ENCODE measurements at regions of chr10 and their contacts with region 1.

Region 1: GRCh38 chr10:48656241-48656913 is 28.3 kb upstream of the WDFY4 start:
- DNase-seq: peak; percentile 96
- H3K4me3 Mint-ChIP-seq: peak overlapping the region; percentile 69
- H3K27ac Mint-ChIP-seq: no peak overlapping the region
- H3K4me1 Mint-ChIP-seq: peaks cover 7% of the 10 kb centered on the region
- H3K27me3 Mint-ChIP-seq: peaks cover 77% of the 10 kb centered on the region
- CTCF ChIP-seq: peak; percentile 99

Region 2: DNA sequence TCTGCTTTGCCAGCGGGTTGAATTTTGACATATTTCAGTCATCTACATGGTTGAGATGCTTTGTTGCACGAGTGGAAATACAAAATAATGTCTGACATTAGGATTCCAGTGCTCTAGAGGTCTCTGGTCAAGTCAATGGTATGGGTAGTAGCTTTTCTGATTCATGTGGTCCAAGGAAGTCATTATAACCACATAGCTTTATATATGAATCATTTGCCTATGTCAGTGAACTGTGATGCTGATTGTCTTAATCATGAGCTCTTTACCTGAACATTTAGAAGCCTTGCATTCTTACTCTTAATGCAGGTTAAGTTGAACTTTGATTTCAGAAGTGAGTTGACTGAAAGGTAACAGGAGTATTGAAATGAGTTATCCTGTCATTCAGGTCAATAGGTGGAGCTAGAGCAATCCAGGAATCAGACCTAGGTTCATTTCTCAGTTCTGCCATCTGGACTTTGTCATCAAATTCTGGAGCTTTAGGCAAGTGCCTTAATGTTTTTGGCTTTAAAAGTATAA is 346.6 kb before region 1 on chr10:
- CTCF ChIA-PET with region 1: interaction called, 15 read pairs
- intact Hi-C with region 1: no loop called
- DNase-seq: no peak
- H3K4me3 Mint-ChIP-seq: peak overlapping the region; percentile 9
- H3K27ac Mint-ChIP-seq: peak overlapping the region; percentile 52
- H3K4me1 Mint-ChIP-seq: peaks cover 38% of the 10 kb centered on the region
- H3K27me3 Mint-ChIP-seq: peaks cover 2% of the 10 kb centered on the region
- CTCF ChIP-seq: no peak

Region 3: DNA sequence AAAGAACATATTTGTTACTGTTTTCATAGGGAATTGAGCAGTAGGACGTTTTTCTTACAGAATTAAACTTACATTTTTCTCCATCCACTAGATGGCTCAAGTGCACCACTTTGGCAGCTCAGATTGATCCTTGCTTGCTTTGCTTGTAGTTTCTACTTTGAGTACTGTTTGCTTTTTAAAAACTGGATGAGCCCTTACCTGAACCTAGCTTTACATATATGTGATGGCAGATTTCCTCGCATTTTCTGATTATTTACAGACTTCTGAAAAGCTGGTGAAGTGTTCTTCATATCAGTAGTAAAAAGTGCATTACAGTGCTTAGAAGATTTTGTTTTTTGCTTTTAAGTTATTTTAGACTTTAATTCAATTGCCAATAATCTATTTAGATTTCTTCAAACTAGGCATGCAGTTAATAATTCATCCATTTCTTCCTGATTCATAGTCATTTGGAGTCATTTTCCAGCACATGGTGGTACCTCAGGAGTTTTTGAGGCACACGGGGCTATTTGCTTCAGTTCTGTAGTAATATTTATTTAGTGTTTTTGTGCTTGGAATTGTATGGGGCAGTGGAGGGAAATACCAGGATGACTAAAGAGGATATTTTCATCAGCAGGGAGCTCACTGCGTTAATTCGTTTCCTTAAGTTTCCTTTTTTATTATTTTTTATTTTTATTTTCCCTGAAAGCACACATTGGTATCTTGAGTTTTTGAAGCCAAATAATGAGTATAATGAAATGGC is 292.6 kb before region 1 on chr10:
- CTCF ChIA-PET with region 1: interaction called, 21 read pairs
- intact Hi-C with region 1: loop called (anchors 1 kb)
- DNase-seq: peak; percentile 44
- H3K4me3 Mint-ChIP-seq: peak overlapping the region; percentile 49
- H3K27ac Mint-ChIP-seq: peak overlapping the region; percentile 76
- H3K4me1 Mint-ChIP-seq: peaks cover 52% of the 10 kb centered on the region
- H3K27me3 Mint-ChIP-seq: no peaks in the 10 kb centered on the region
- CTCF ChIP-seq: peak; percentile 62

Region 4: GRCh38 chr10:48444266-48444665 is 212.1 kb before region 1 on chr10:
- CTCF ChIA-PET with region 1: interaction called, 12 read pairs
- intact Hi-C with region 1: no loop called
- DNase-seq: no peak
- H3K4me3 Mint-ChIP-seq: no peak overlapping the region
- H3K27ac Mint-ChIP-seq: no peak overlapping the region
- H3K4me1 Mint-ChIP-seq: peaks cover 11% of the 10 kb centered on the region
- H3K27me3 Mint-ChIP-seq: peaks cover 9% of the 10 kb centered on the region
- CTCF ChIP-seq: no peak

Region 5: GRCh38 chr10:48551861-48552591 is 104.4 kb before region 1 on chr10:
- CTCF ChIA-PET with region 1: interaction called, 42 read pairs
- intact Hi-C with region 1: loop called (anchors 2 kb)
- DNase-seq: peak; percentile 25
- H3K4me3 Mint-ChIP-seq: no peak overlapping the region
- H3K27ac Mint-ChIP-seq: no peak overlapping the region
- H3K4me1 Mint-ChIP-seq: no peaks in the 10 kb centered on the region
- H3K27me3 Mint-ChIP-seq: peaks cover 41% of the 10 kb centered on the region
- CTCF ChIP-seq: peak; percentile 52

Region 6: DNA sequence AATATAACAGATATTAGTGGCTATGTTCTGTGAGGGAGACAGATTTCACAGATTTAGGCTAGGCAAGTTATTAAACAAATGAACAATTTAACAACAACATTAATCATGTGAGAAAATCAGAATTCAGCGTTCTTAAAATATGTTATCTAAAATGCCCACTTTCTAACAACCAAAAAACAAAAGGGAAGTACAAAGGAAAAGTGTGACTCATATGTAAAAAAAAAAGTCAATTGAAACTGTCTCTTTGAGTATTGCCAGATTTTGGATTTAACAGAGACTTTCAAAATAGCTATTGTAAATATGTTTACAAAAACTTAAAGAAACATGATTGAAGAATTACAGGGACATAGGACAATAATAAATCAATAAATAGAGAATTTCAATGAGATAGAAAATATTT is 16.7 kb before region 1 on chr10:
- CTCF ChIA-PET with region 1: no interaction called
- intact Hi-C with region 1: no loop called
- DNase-seq: no peak
- H3K4me3 Mint-ChIP-seq: no peak overlapping the region
- H3K27ac Mint-ChIP-seq: no peak overlapping the region
- H3K4me1 Mint-ChIP-seq: no peaks in the 10 kb centered on the region
- H3K27me3 Mint-ChIP-seq: peaks cover 41% of the 10 kb centered on the region
- CTCF ChIP-seq: no peak

Region 7: GRCh38 chr10:49164559-49165188 is 508.3 kb after region 1 on chr10:
- CTCF ChIA-PET with region 1: interaction called, 14 read pairs
- intact Hi-C with region 1: loop called (anchors 2 kb)
- DNase-seq: peak; percentile 55
- H3K4me3 Mint-ChIP-seq: no peak overlapping the region
- H3K27ac Mint-ChIP-seq: no peak overlapping the region
- H3K4me1 Mint-ChIP-seq: no peaks in the 10 kb centered on the region
- H3K27me3 Mint-ChIP-seq: peaks cover 92% of the 10 kb centered on the region
- CTCF ChIP-seq: peak; percentile 53